ENCODE measurements at regions of chr7 and their contacts with region 1.

Region 1: GRCh38 chr7:34133983-34134782 is 228.8 kb downstream of the BMPER start:
- DNase-seq: peak; percentile 36
- ATAC-seq: peak; percentile 94
- H3K4me3 ChIP-seq: no peak overlapping the region
- H3K27ac ChIP-seq: no peak overlapping the region
- H3K4me1 ChIP-seq: no peaks in the 10 kb centered on the region
- H3K27me3 ChIP-seq: no peaks in the 10 kb centered on the region
- CTCF ChIP-seq: peak; percentile 61 to 90 (median 86)
- POLR2A ChIP-seq: no peak
- RAD21 ChIP-seq: peak; percentile 88

Region 2: GRCh38 chr7:33836786-33837355 is 297.3 kb before region 1 on chr7:
- CTCF ChIA-PET with region 1: no interaction called
- POLR2A ChIA-PET with region 1: no interaction called
- RAD21 ChIA-PET with region 1: no interaction called
- intact Hi-C with region 1: no loop called
- DNase-seq: peak; percentile 46
- ATAC-seq: peak; percentile 80
- H3K4me3 ChIP-seq: no peak overlapping the region
- H3K27ac ChIP-seq: no peak overlapping the region
- H3K4me1 ChIP-seq: no peaks in the 10 kb centered on the region
- H3K27me3 ChIP-seq: no peaks in the 10 kb centered on the region
- CTCF ChIP-seq: peak in 2 of 3 experiments; percentile 62 to 84; a peak in 4 of 6 replicates
- POLR2A ChIP-seq: no peak
- RAD21 ChIP-seq: no peak

Region 3: GRCh38 chr7:34315032-34315431 is 180.8 kb after region 1 on chr7:
- CTCF ChIA-PET with region 1: no interaction called
- POLR2A ChIA-PET with region 1: no interaction called
- RAD21 ChIA-PET with region 1: interaction called in 1 of 2 experiments, 3 read pairs
- intact Hi-C with region 1: loop called (anchors 5 kb)
- DNase-seq: no peak
- ATAC-seq: no peak
- H3K4me3 ChIP-seq: no peak overlapping the region
- H3K27ac ChIP-seq: no peak overlapping the region
- H3K4me1 ChIP-seq: no peaks in the 10 kb centered on the region
- H3K27me3 ChIP-seq: no peaks in the 10 kb centered on the region
- CTCF ChIP-seq: no peak
- POLR2A ChIP-seq: no peak
- RAD21 ChIP-seq: no peak

Region 4: GRCh38 chr7:34321000-34321581 is 186.9 kb after region 1 on chr7:
- CTCF ChIA-PET with region 1: interaction called, 14 read pairs
- POLR2A ChIA-PET with region 1: no interaction called
- RAD21 ChIA-PET with region 1: interaction called in 1 of 2 experiments, 3 read pairs
- intact Hi-C with region 1: loop called (anchors 5 kb)
- DNase-seq: peak; percentile 54
- ATAC-seq: peak; percentile 98
- H3K4me3 ChIP-seq: no peak overlapping the region
- H3K27ac ChIP-seq: no peak overlapping the region
- H3K4me1 ChIP-seq: 0 out of 4 replicates have a peak, but pooled peaks cover 0 to 3% of the 10 kb centered on the region in 2 experiments
- H3K27me3 ChIP-seq: no peaks in the 10 kb centered on the region
- CTCF ChIP-seq: peak; percentile 75 to 91 (median 90); a peak in 5 of 6 replicates
- POLR2A ChIP-seq: no peak
- RAD21 ChIP-seq: peak; percentile 89

Region 5: GRCh38 chr7:34430458-34430857 is 296.3 kb after region 1 on chr7:
- CTCF ChIA-PET with region 1: no interaction called
- POLR2A ChIA-PET with region 1: no interaction called
- RAD21 ChIA-PET with region 1: no interaction called
- intact Hi-C with region 1: loop called (anchors 1 kb)
- DNase-seq: peak; percentile 4
- ATAC-seq: peak; percentile 83
- H3K4me3 ChIP-seq: no peak overlapping the region
- H3K27ac ChIP-seq: no peak overlapping the region
- H3K4me1 ChIP-seq: no peaks in the 10 kb centered on the region
- H3K27me3 ChIP-seq: no peaks in the 10 kb centered on the region
- CTCF ChIP-seq: peak; percentile 63 to 75 (median 73)
- POLR2A ChIP-seq: no peak
- RAD21 ChIP-seq: peak; percentile 78

Measured in HCT116 (cell line).